ENCODE measurements at regions of chr15 and their contacts with region 1.

Region 1: GRCh38 chr15:71424765-71425164 is 309.5 kb downstream of the THSD4 start:
- DNase-seq: no peak
- ATAC-seq: no peak
- H3K4me3 ChIP-seq: no peak overlapping the region
- H3K27ac ChIP-seq: no peak overlapping the region
- H3K4me1 ChIP-seq: peaks cover 0 to 29% (median 0%) of the 10 kb centered on the region in 9 donors
- H3K27me3 ChIP-seq: no peaks in the 10 kb centered on the region
- CTCF ChIP-seq: no peak

Region 2: DNA sequence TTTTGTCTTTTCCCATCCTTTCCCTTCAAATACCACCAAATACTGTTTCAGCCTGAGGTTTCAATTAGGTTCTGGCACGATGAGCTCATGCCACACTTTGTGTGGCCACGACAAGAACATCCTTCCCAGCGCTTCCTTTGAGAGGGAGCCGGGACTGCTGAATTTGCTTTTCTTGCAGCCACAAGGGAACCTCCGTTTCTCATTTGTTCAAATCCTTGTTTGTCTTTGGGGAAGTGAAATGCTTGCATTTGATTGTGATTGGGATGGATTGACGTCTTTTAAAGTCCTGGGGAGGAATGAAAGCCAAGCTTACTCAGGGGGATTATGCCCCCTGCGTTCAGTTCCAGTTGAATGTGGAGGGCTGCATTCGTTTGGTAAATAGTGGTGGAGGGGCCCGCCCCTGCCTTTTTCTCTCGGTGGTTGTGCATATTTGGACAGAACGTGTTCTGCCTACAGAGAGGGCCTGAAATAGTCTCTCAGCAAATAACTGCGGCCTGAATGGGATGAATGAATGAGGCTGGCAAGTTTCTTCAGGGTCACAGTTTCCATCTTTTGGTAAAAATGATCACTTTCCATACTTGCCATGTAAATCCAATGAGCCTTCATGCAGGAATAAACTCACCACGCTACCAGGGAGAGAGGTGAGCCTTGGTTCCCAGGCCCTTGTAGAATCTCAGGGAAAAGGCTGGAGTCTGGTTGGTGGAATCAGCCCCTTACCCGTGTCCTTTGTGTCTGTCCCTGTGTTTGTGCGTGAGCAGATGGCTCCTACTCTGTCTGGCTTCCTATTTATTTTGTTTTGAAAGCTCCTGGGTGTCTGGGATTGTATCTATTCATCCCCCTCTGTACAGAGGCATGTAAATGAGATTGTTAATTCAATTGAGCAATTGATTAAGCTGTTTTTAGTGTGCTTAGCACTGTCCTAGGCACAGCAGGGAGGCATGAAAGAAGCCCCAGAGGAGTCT is 31.7 kb before region 1 on chr15:
- intact Hi-C with region 1: loop called in 1 of 10 experiments (anchors 5 kb)
- DNase-seq: no peak
- ATAC-seq: no peak
- H3K4me3 ChIP-seq: no peak overlapping the region
- H3K27ac ChIP-seq: no peak overlapping the region
- H3K4me1 ChIP-seq: peaks cover 0 to 41% (median 14%) of the 10 kb centered on the region in 9 donors
- H3K27me3 ChIP-seq: no peaks in the 10 kb centered on the region
- CTCF ChIP-seq: no peak

Region 3: DNA sequence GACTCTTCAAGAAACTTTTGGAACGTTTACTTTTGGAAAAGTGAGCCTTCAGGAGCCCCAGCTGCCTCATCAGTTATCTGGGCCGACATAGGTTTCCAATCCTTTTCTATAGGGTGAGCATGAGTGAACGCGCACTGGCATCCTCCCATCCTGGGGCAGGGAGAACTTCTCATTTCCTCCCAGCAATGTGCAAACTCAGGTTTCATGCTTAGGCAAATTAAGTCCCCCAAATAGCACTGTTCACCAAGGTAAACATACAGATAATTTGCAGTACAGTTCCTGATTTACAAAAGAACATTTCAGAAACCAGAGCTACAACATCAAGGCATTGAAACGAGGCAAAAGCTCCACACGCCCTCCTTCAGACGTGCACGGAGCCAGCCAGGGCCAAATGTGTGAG is 52.1 kb after region 1 on chr15:
- intact Hi-C with region 1: no loop called
- DNase-seq: no peak
- ATAC-seq: no peak
- H3K4me3 ChIP-seq: no peak overlapping the region
- H3K27ac ChIP-seq: no peak overlapping the region
- H3K4me1 ChIP-seq: peaks cover 0 to 16% (median 0%) of the 10 kb centered on the region in 9 donors
- H3K27me3 ChIP-seq: no peaks in the 10 kb centered on the region
- CTCF ChIP-seq: no peak

Measured in heart right ventricle (tissue), 16 donors.